Right cardiac atrium (tissue), 5 donors: ENCODE measurements at regions of chr4 and their contacts with region 1.

Region 1: GRCh38 chr4:137124278-137124932 is 407.9 kb downstream of the PCDH18 start:
- DNase-seq: no peak
- ATAC-seq: peak; percentile 93 to 95
- H3K4me3 ChIP-seq: peak overlapping the region; percentile 31
- H3K27ac ChIP-seq: no peak overlapping the region
- H3K4me1 ChIP-seq: no peaks in the 10 kb centered on the region
- H3K27me3 ChIP-seq: no peaks in the 10 kb centered on the region

Region 2: DNA sequence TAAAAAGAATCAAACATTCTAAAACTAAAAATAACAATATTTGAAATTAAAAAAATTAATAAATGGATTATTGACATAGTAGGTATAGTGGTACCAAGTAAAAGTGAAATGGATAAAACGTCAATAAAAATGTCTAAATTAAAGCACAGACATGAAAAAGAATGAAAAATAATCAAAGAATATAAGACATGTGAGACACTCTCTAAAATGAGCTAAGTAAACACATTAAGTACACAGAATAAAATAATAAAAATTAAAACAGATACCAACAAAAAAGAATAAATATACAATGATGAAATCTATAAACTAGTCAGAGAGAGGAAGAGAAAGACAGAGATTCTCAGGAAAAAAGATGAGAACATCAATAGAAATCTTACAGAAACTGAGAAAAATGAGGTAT is 63.7 kb before region 1 on chr4:
- intact Hi-C with region 1: no loop called
- DNase-seq: no peak
- ATAC-seq: no peak
- H3K4me3 ChIP-seq: no peak overlapping the region
- H3K27ac ChIP-seq: no peak overlapping the region
- H3K4me1 ChIP-seq: no peaks in the 10 kb centered on the region
- H3K27me3 ChIP-seq: no peaks in the 10 kb centered on the region

Region 3: DNA sequence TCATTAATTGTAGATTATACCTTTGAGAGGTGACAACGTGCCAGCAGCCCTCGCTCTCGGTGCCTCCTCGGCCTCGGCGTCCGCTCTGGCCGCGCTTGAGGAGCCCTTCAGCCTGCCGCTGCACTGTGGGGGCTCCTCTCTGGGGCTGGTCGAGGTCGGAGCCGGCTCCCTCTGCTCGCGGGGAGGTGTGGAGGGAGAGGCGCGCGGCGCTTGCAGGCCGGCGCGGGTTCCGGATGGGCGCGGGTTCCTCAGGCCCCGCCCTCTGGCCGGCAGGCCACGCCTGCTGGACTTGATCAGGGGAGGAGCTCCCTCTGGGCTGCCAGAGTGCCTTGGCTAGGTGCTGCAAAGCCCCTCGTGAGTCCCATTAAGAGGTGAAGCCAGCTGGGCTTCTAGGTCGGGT is 729.0 kb after region 1 on chr4:
- intact Hi-C with region 1: loop called in 1 of 4 experiments (anchors 10 kb)
- DNase-seq: peak in 1 of 3 donors; percentile 47
- ATAC-seq: no peak
- H3K4me3 ChIP-seq: no peak overlapping the region
- H3K27ac ChIP-seq: no peak overlapping the region
- H3K4me1 ChIP-seq: no peaks in the 10 kb centered on the region
- H3K27me3 ChIP-seq: no peaks in the 10 kb centered on the region

Region 4: DNA sequence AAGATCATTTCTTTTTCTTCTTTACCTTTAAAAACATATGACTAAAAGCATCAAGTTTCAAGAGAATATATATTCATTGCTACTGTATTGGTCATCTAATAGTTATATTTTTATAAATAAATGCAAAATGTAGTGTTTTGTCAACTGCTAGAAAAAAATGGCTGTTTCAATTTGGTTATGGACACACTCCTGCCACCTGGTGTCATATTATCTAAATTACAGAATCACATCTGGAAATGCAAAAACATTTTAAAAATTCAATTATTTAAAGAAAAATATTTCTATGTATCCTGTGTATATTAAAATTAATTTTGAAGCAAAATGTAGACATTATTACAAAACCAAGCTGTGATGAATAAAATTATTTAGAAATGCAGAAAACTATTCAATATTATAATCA is 737.3 kb after region 1 on chr4:
- intact Hi-C with region 1: loop called in 3 of 4 experiments (anchors 5 to 10 kb)
- DNase-seq: no peak
- ATAC-seq: no peak
- H3K4me3 ChIP-seq: no peak overlapping the region
- H3K27ac ChIP-seq: no peak overlapping the region
- H3K4me1 ChIP-seq: no peaks in the 10 kb centered on the region
- H3K27me3 ChIP-seq: no peaks in the 10 kb centered on the region